Activated CD8-positive, alpha-beta T cell treated with anti-CD3 and anti-CD28 coated beads, Interleukin-2, amount 10 ng/mL, durations not matched to agents 7 days and 5 days (primary cell): ENCODE measurements at regions of chr2 and their contacts with region 1.

Region 1: GRCh38 chr2:201158111-201158929 is 24.6 kb upstream of the CASP10 start:
- DNase-seq: peak; percentile 80
- ATAC-seq: peak; percentile 90
- H3K4me3 Mint-ChIP-seq: no peak overlapping the region
- H3K27ac Mint-ChIP-seq: peak overlapping the region; percentile 76
- H3K4me1 Mint-ChIP-seq: peaks cover 11% of the 10 kb centered on the region
- H3K27me3 Mint-ChIP-seq: no peaks in the 10 kb centered on the region

Region 2: GRCh38 chr2:201130524-201131186 is 27.7 kb before region 1 on chr2:
- CTCF ChIA-PET with region 1: interaction called, 48 read pairs
- POLR2A ChIA-PET with region 1: interaction called, 8 read pairs
- DNase-seq: peak; percentile 43
- ATAC-seq: peak; percentile 48
- H3K4me3 Mint-ChIP-seq: peak overlapping the region; percentile 62
- H3K27ac Mint-ChIP-seq: peak overlapping the region; percentile 85
- H3K4me1 Mint-ChIP-seq: peaks cover 72% of the 10 kb centered on the region
- H3K27me3 Mint-ChIP-seq: no peaks in the 10 kb centered on the region

Region 3: DNA sequence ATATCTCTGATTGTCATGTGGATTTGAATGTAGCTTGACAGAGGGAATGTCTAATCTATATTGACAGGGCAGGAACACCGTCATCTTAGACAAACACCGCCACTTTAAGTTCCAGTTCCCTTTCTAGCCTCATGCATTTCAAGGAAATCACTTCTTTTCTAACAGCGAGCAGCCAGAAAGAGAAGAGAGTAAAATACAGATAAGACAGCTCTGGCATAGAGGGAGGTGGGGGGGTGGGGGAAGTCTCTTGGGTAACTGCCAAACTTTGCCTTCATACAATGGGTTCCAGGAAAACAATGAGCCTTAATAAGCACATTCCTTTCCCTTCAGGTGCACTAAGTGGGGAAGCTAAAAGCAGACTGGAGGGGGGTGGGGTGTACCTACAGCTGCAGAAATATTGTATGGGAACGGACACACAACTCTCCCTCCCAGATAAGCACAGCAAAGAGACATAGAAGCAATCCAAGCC is 61.8 kb after region 1 on chr2:
- CTCF ChIA-PET with region 1: no interaction called
- POLR2A ChIA-PET with region 1: no interaction called
- DNase-seq: no peak
- ATAC-seq: no peak
- H3K4me3 Mint-ChIP-seq: no peak overlapping the region
- H3K27ac Mint-ChIP-seq: peak overlapping the region; percentile 39
- H3K4me1 Mint-ChIP-seq: peaks cover 39% of the 10 kb centered on the region
- H3K27me3 Mint-ChIP-seq: no peaks in the 10 kb centered on the region

Region 4: GRCh38 chr2:201275990-201276389 is 117.7 kb after region 1 on chr2:
- CTCF ChIA-PET with region 1: no interaction called
- POLR2A ChIA-PET with region 1: no interaction called
- DNase-seq: no peak
- ATAC-seq: peak; percentile 27
- H3K4me3 Mint-ChIP-seq: no peak overlapping the region
- H3K27ac Mint-ChIP-seq: peak overlapping the region; percentile 12
- H3K4me1 Mint-ChIP-seq: peaks cover 31% of the 10 kb centered on the region
- H3K27me3 Mint-ChIP-seq: no peaks in the 10 kb centered on the region

Region 5: GRCh38 chr2:201403880-201404279 is 245.6 kb after region 1 on chr2:
- CTCF ChIA-PET with region 1: no interaction called
- POLR2A ChIA-PET with region 1: no interaction called
- DNase-seq: no peak
- ATAC-seq: no peak
- H3K4me3 Mint-ChIP-seq: no peak overlapping the region
- H3K27ac Mint-ChIP-seq: no peak overlapping the region
- H3K4me1 Mint-ChIP-seq: peaks cover 52% of the 10 kb centered on the region
- H3K27me3 Mint-ChIP-seq: no peaks in the 10 kb centered on the region